Endothelial cell of umbilical vein (primary cell): ENCODE measurements at regions of chr11 and their contacts with region 1.

Region 1: DNA sequence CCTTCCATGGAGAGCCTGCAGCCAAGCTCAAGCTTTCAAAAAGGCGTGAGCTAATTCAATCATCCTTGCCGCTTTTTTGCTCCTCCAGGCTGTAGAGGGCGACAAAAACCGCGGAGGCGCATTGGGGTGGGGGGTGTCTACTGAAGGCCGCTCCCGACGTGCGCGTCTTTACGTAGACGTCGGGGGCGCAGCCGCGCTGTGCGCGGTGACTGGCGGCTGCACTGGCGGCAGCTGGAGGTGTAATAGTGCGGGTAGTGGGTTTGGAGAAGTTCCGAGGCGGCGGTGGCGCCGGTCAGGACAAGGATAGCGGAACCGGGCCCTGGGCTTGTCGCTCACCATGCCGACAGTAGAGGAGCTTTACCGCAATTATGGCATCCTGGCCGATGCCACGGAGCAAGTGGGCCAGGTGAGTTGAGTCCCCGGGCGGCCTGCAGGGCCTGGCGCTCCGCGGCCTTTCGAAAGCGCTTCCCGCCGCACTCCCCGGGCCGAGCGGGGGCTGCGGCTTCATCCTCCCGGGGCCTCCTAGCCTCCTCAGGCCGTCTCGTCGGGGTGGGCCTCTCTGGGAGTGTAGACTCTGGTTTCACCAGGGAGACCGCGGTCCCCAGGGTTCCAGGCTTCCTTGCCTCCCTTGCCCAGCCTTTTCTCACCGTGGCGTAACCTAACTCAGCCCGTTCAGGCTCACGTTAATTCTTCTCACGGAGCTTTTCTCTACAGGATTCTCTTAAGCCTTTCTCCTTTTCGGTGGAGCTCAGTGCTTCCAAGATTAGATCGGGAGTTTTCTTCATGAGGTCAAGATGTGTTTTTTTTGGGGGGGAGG is at the start of gene API5:
- DNase-seq: peak; percentile 96
- H3K4me3 ChIP-seq: peak within 1 kb of the TSS; percentile 89 to 98 (median 97)
- H3K27ac ChIP-seq: peak within 1 kb of the TSS; percentile 73
- H3K4me1 ChIP-seq: peaks cover 11% of the 10 kb centered on the region
- H3K27me3 ChIP-seq: no peaks in the 10 kb centered on the region
- CTCF ChIP-seq: peak; percentile 74 to 85
- POLR2A ChIP-seq: peak; percentile 91
- total RNA-seq, gene API5: 102 and 103 TPM in 2 replicates

Region 2: DNA sequence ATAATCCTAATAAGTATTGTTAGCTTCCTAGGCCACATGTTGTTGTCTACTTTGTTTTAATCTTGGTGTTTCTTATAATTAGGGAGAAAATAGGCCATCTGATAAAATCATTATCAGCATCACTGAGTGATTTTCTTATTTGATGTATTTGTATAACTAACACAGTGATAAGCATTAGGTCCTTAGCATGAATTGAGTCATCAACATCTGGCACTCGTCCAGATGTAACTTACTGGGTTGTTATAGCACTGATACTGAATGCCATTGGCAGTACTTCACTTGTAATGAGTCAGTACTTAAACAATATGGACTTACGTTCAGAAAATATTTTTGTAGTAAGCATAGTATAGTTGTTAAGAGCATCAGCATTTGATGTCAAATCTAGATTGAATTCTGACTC is 16.0 kb after region 1 on chr11:
- CTCF ChIA-PET with region 1: interaction called, 11 read pairs
- POLR2A ChIA-PET with region 1: no interaction called
- dilution Hi-C with region 1: no loop called
- intact Hi-C with region 1: no loop called
- DNase-seq: peak; percentile 97
- H3K4me3 ChIP-seq: no peak overlapping the region
- H3K27ac ChIP-seq: peak overlapping the region; percentile 48
- H3K4me1 ChIP-seq: peaks cover 10% of the 10 kb centered on the region
- H3K27me3 ChIP-seq: no peaks in the 10 kb centered on the region
- CTCF ChIP-seq: no peak
- POLR2A ChIP-seq: no peak

Region 3: GRCh38 chr11:43358801-43359421 is 46.9 kb after region 1 on chr11 and contains the start of gene TTC17:
- CTCF ChIA-PET with region 1: interaction called, 18 read pairs
- POLR2A ChIA-PET with region 1: interaction called, 13 read pairs
- dilution Hi-C with region 1: no loop called
- intact Hi-C with region 1: loop called (anchors 2 kb)
- DNase-seq: peak; percentile 90
- H3K4me3 ChIP-seq: peak within 1 kb of the TSS; percentile 57 to 74 (median 62)
- H3K27ac ChIP-seq: peak within 1 kb of the TSS; percentile 66
- H3K4me1 ChIP-seq: peaks cover 17% of the 10 kb centered on the region
- H3K27me3 ChIP-seq: no peaks in the 10 kb centered on the region
- CTCF ChIP-seq: no peak
- POLR2A ChIP-seq: peak; percentile 97
- total RNA-seq, gene TTC17: 55.7 and 66.8 TPM in 2 replicates

Region 4: GRCh38 chr11:43419460-43419859 is 107.5 kb after region 1 on chr11:
- CTCF ChIA-PET with region 1: interaction called, 16 read pairs
- POLR2A ChIA-PET with region 1: no interaction called
- dilution Hi-C with region 1: no loop called
- intact Hi-C with region 1: loop called (anchors 1 kb)
- DNase-seq: peak; percentile 59
- H3K4me3 ChIP-seq: no peak overlapping the region
- H3K27ac ChIP-seq: no peak overlapping the region
- H3K4me1 ChIP-seq: no peaks in the 10 kb centered on the region
- H3K27me3 ChIP-seq: no peaks in the 10 kb centered on the region
- CTCF ChIP-seq: peak; percentile 37 to 47
- POLR2A ChIP-seq: no peak

Region 5: DNA sequence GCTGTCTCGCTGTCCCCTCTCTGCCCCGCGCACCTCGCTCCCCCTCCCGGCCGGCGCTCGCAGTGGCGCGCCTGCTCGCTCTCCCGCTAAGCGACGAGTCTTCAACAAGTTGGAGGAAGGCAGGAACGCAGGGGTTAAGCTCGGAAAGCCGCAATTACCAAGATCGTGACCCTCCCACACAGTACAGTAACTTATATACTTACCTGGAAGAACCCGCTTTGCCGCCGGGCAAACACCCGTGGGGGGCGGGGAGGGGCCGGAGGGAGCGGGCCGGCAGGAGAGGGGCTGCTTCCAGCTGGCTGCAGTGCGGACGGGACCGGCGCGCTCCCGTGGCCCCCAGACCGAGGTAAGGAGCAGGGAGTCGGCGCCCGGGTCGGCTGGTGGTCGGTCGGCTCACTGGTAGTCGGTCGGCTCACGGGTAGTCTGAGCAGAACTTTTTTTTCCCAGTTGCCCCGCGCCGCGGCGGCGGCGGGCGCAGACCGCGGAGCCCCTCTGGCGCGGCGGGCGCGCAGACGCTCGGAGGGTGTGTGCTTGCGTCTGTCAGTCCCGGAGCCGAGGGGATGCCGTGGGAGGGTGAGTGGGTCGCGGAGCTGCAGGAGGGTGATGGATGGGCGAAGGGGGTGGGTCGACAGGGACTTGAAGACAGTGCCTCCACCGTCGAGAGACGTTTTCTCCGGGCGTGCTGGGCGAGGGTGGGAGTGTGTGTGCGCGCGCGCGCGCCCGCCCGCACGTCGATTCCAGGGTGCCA is 267.3 kb after region 1 on chr11:
- CTCF ChIA-PET with region 1: no interaction called
- POLR2A ChIA-PET with region 1: no interaction called
- dilution Hi-C with region 1: no loop called
- intact Hi-C with region 1: loop called (anchors 5 kb)
- DNase-seq: peak; percentile 51
- H3K4me3 ChIP-seq: peak overlapping the region; percentile 27 to 48 (median 43)
- H3K27ac ChIP-seq: no peak overlapping the region
- H3K4me1 ChIP-seq: peaks cover 5% of the 10 kb centered on the region
- H3K27me3 ChIP-seq: peaks cover 86 to 91% of the 10 kb centered on the region in 2 experiments
- CTCF ChIP-seq: peak in 1 of 2 donors; percentile 59
- POLR2A ChIP-seq: no peak

Region 6: GRCh38 chr11:44565211-44565952 is 1253.4 kb after region 1 on chr11 and contains the start of gene CD82:
- CTCF ChIA-PET with region 1: no interaction called
- POLR2A ChIA-PET with region 1: no interaction called
- dilution Hi-C with region 1: no loop called
- intact Hi-C with region 1: loop called (anchors 5 kb)
- DNase-seq: peak; percentile 99
- H3K4me3 ChIP-seq: peak within 1 kb of the TSS; percentile 25 to 42 (median 41)
- H3K27ac ChIP-seq: peak within 1 kb of the TSS; percentile 94
- H3K4me1 ChIP-seq: peaks cover 40% of the 10 kb centered on the region
- H3K27me3 ChIP-seq: no peaks in the 10 kb centered on the region
- CTCF ChIP-seq: peak; percentile 5 to 30
- POLR2A ChIP-seq: no peak
- total RNA-seq, gene CD82: 24.9 and 25.2 TPM in 2 replicates